AG04449 (cell line): ENCODE measurements at regions of chr15 and their contacts with region 1.

Region 1: DNA sequence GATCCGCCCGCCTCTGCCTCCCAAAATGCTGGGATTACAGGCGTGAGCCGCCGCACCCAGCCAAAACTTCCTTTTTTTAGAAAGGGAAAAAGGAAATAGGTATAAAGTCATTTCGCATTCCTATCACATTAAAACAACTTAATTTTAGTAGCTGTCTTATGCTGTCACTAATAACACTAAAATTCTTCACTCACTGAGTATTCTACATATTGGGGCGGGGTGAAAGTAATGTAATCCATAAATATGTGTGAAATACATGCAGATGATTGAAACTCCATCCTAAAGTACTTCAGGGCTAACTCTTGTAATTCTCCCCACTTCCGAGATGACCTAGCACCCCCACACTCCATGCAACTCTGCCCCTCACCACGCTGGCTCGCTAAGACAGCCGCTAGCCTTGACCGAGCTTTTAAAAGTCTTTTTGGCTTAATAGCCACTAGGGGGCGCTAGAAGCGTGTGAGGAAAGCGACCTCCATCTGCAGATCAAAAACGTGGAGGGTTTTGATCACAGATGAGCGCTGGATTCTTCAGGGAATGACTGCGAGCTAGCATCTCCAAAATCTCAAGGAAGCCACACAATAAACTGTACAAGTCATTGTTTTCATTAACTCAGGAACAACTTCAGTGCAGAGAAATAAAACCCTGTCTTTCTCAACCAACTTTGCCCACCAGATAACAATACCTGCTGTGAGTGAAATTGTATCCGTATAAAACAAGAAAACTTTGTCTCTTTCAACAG is 129.3 kb upstream of the IGF1R start:
- DNase-seq: no peak
- H3K4me3 ChIP-seq: no peak overlapping the region
- CTCF ChIP-seq: peak; percentile 59

Region 2: DNA sequence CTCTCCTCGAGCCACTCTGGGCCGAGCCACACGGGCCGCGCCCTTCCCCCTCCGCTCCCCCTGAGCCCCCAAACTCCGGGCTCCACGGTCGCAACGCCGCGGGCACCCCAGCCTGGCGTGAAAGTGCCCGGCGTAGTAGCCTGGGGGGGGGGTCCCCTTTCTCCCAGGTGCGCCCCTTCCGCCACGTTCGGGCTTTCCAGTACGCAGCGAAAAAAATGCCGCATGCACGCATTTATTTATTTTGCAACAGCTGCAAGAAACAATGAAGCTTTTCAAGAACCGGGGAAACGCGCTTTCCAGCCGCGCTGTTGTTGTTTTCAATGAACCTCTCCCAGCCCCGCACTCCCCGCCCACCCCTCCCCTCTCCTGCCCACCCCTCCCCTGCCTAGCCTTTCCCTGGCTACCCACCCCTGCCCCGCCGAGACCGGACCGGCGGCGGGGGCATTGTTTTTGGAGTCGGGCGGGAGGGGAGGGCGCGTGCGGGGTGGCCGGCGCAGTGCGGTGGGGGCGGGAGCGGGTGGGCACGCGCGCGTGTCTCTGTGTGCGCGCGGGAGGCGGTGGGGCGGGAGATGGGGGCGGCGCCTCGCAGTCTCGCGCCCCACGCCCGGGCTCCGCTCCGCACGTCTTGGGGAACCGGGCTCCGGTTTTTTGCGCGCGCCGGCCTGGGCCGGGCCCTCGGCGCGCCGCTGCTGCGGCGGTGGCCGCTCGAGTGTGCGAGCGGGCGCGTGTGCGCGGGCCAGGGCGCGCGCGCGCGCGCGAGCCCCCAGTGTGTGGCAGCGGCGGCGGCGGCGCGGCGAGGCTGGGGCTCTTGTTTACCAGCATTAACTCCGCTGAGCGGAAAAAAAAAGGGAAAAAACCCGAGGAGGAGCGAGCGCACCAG is 129.0 kb after region 1 on chr15 and contains the start of gene IGF1R:
- CTCF ChIA-PET with region 1: interaction called, 41 read pairs
- POLR2A ChIA-PET with region 1: interaction called, 6 read pairs
- DNase-seq: no peak
- H3K4me3 ChIP-seq: peak within 1 kb of the TSS; percentile 87
- CTCF ChIP-seq: no peak

Region 3: DNA sequence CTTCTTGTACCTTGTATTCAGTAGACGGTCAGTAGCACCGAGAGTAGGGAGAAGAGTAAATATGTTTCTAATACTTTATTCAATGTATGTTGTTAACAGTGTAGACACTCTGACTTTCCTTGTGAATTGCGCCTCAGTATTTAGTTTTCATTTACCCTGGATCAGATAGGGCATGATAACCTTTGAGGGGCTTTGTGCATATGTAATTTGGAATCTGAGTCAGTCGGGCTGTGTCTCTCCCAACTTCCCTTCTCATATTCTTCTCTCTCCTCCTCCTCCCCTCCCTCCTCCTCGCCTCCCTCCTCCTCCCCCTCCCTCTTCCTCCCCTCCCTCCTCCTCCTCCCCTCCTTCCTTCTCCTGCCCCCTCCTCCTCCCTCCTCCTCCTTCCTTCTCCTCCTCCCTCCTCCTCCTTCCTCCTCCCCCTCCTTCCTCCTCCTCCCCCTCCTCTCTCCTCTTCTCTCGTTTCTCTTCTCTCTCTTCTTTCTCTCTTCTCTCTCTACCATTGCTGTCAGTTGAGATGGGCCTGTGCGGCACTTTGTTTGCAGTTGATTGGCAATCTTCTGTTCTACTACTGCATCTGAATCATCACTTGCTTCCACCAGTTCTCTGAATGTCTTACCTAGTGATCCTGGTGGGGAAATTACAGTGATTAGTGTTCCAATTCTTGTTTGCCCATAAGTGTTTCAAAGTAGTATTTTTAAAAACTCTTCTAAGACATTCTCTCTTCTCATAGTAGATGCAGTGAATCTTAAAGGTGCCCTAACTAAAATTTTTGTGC is 326.3 kb after region 1 on chr15:
- CTCF ChIA-PET with region 1: interaction called, 13 read pairs
- POLR2A ChIA-PET with region 1: no interaction called
- DNase-seq: no peak
- H3K4me3 ChIP-seq: no peak overlapping the region
- CTCF ChIP-seq: no peak

Region 4: GRCh38 chr15:98904544-98904943 is 385.6 kb after region 1 on chr15:
- CTCF ChIA-PET with region 1: interaction called, 28 read pairs
- POLR2A ChIA-PET with region 1: no interaction called
- DNase-seq: no peak
- H3K4me3 ChIP-seq: no peak overlapping the region
- CTCF ChIP-seq: peak; percentile 71

Region 5: DNA sequence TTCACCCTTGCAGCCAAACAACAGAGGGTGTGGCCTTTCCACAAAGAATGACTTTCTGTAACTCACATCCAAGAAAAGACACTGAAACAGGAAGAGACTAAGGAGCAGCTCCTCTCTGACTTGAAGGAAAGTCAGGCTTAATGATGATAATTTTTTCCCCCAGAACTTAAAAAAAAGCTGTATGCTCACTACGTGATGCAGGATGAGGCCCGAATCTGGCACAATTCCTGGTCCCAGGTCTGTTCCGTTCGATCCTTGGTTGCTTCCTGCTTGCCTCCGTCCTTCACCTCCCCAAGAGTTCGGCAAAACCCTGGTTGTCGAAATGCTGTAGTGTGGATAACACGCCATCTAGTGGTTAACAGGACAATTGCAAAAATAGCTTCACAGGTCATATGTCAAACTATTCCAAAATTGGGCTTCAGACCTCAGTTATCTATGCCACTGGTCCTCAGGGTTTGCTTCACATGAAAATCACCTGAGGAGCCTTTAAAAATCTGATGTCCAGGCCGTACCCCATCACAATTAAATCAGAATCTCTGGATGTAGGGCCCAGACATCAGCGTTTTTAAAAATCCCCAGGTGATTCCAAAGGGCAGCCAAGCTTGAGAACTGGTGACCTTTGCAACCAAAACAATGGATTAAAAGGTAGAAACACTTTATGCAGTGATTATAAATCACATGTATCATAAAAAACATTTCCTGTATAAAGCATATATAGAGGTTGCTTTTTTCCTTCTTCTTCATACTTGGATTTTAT is 557.7 kb after region 1 on chr15:
- CTCF ChIA-PET with region 1: interaction called, 203 read pairs
- POLR2A ChIA-PET with region 1: no interaction called
- DNase-seq: peak; percentile 28
- H3K4me3 ChIP-seq: peak overlapping the region; percentile 41
- CTCF ChIP-seq: peak; percentile 73